Vagina (tissue), 2 donors: ENCODE measurements at regions of chr17 and their contacts with region 1.

Region 1: DNA sequence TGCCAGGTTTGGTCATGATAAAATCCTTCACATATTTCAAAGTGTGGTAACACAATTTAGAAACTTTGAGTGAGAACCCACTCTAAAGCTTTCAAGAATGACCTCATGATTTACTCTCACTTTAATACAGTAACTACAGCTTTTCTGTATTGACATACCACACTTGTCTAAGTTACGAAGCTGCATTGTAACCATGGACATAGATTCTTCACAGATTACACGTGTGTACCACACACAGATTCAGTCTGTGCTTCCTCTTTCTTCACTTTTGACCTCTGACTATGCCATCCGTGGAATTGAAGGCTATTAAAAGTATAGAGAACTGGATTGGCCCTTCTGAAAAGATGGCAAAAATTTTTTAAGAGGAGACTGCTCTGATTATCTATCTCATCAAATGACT is 172.7 kb downstream of the TANC2 start:
- DNase-seq: no peak
- H3K4me3 ChIP-seq: no peak overlapping the region
- H3K27ac ChIP-seq: no peak overlapping the region
- H3K4me1 ChIP-seq: no peaks in the 10 kb centered on the region
- H3K27me3 ChIP-seq: no peaks in the 10 kb centered on the region
- CTCF ChIP-seq: no peak
- POLR2A ChIP-seq: no peak

Region 2: DNA sequence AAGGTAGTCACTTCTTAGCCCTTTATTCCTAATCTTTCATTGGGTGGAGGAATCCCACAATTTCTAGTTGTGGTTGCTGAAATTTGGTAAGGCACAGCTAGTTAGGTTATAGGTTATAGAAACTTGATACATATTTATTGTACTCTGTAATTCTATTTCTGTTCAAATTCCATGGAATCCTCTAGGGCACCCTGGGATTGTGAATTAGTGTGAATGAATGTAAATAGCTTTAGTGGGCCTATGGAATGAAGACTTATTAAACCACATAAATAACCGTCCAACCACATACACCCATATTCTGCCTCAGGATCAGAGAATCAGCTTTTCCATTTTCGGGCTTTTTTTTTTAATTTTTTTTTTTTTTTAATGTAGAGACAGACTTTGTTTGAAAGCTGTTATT is 163.5 kb before region 1 on chr17:
- intact Hi-C with region 1: loop called (anchors 5 kb)
- DNase-seq: no peak
- H3K4me3 ChIP-seq: no peak overlapping the region
- H3K27ac ChIP-seq: no peak overlapping the region
- H3K4me1 ChIP-seq: no peaks in the 10 kb centered on the region
- H3K27me3 ChIP-seq: no peaks in the 10 kb centered on the region
- CTCF ChIP-seq: no peak
- POLR2A ChIP-seq: no peak